HepG2 (cell line): ENCODE measurements at regions of chr3 and their contacts with region 1.

Region 1: DNA sequence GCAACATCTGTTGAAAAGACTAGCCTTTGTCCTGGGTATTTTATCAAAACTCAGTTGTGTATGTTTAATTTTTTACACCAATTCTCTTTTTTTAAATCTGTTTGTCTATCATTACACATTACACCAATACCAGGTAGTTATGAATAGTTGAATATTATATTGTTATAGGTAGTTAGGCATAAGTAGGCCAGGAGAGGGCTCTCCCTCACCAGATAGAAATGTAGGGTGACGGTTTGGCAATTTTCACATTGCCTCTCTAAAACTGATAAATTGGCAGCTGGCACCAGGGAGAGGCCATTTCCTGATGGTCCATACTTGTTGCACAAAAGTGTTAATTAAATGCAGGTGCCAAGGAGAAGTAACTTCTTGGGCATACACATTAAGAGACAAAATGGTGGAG is 483.1 kb upstream of the EPHA6 start:
- DNase-seq: no peak
- ATAC-seq: 0 out of 3 replicates have a peak, but pooled peaks have one; percentile 34
- H3K4me3 ChIP-seq: no peak overlapping the region
- H3K27ac ChIP-seq: no peak overlapping the region
- H3K4me1 ChIP-seq: no peaks in the 10 kb centered on the region
- H3K27me3 ChIP-seq: no peaks in the 10 kb centered on the region
- CTCF ChIP-seq: peak; percentile 16; the same call in 1 of the 2 replicates
- EP300 ChIP-seq: no peak
- POLR2A ChIP-seq: no peak
- RAD21 ChIP-seq: no peak

Region 2: DNA sequence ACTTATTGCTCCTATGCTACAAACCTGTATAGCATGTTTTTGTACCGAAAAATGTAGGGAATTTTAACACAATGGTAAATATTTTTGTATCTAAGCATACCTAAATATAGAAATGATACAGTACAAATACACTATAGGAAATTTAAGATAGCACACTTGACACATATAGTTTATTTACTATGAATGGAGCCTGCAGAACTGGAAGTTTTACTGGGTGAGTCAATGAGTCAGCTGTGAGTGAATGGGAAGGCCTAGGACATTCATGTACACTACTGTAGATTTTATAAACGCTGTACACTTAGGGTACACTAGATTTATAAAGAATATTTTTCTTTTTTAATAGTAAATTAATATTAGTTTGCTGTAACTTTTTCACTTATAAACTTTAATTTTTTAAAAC is 224.6 kb before region 1 on chr3:
- CTCF ChIA-PET with region 1: no interaction called
- POLR2A ChIA-PET with region 1: no interaction called
- in situ Hi-C with region 1: no loop called
- intact Hi-C with region 1: no loop called
- DNase-seq: no peak
- ATAC-seq: no peak
- H3K4me3 ChIP-seq: no peak overlapping the region
- H3K27ac ChIP-seq: no peak overlapping the region
- H3K4me1 ChIP-seq: no peaks in the 10 kb centered on the region
- H3K27me3 ChIP-seq: no peaks in the 10 kb centered on the region
- CTCF ChIP-seq: no peak
- EP300 ChIP-seq: no peak
- POLR2A ChIP-seq: no peak
- RAD21 ChIP-seq: no peak

Region 3: GRCh38 chr3:96666073-96666472 is 334.7 kb after region 1 on chr3:
- CTCF ChIA-PET with region 1: no interaction called
- POLR2A ChIA-PET with region 1: no interaction called
- in situ Hi-C with region 1: no loop called
- intact Hi-C with region 1: no loop called
- DNase-seq: no peak
- ATAC-seq: no peak
- H3K4me3 ChIP-seq: no peak overlapping the region
- H3K27ac ChIP-seq: no peak overlapping the region
- H3K4me1 ChIP-seq: no peaks in the 10 kb centered on the region
- H3K27me3 ChIP-seq: no peaks in the 10 kb centered on the region
- CTCF ChIP-seq: no peak
- EP300 ChIP-seq: no peak
- POLR2A ChIP-seq: no peak
- RAD21 ChIP-seq: no peak

Region 4: GRCh38 chr3:96700322-96701315 is 369.3 kb after region 1 on chr3:
- CTCF ChIA-PET with region 1: no interaction called
- POLR2A ChIA-PET with region 1: no interaction called
- in situ Hi-C with region 1: no loop called
- intact Hi-C with region 1: loop called (anchors 5 kb)
- DNase-seq: no peak
- ATAC-seq: peak; percentile 65
- H3K4me3 ChIP-seq: no peak overlapping the region
- H3K27ac ChIP-seq: no peak overlapping the region
- H3K4me1 ChIP-seq: no peaks in the 10 kb centered on the region
- H3K27me3 ChIP-seq: no peaks in the 10 kb centered on the region
- CTCF ChIP-seq: no peak
- EP300 ChIP-seq: no peak
- POLR2A ChIP-seq: no peak
- RAD21 ChIP-seq: no peak

Region 5: GRCh38 chr3:96813134-96813819 is 481.9 kb after region 1 on chr3:
- CTCF ChIA-PET with region 1: no interaction called
- POLR2A ChIA-PET with region 1: no interaction called
- in situ Hi-C with region 1: no loop called
- intact Hi-C with region 1: loop called (anchors 5 kb)
- DNase-seq: peak; percentile 58
- ATAC-seq: peak; percentile 97
- H3K4me3 ChIP-seq: peak overlapping the region in 2 of 3 experiments; percentile 39 to 72; a peak in 4 of 6 replicates
- H3K27ac ChIP-seq: no peak overlapping the region
- H3K4me1 ChIP-seq: peaks cover 15% of the 10 kb centered on the region
- H3K27me3 ChIP-seq: peaks cover 2 to 23% of the 10 kb centered on the region in 2 experiments; a peak in 3 of 5 replicates
- CTCF ChIP-seq: peak; percentile 89
- EP300 ChIP-seq: no peak
- POLR2A ChIP-seq: no peak
- RAD21 ChIP-seq: peak; percentile 73